Mammary epithelial cell (primary cell): ENCODE measurements at regions of chr10 and their contacts with region 1.

Region 1: DNA sequence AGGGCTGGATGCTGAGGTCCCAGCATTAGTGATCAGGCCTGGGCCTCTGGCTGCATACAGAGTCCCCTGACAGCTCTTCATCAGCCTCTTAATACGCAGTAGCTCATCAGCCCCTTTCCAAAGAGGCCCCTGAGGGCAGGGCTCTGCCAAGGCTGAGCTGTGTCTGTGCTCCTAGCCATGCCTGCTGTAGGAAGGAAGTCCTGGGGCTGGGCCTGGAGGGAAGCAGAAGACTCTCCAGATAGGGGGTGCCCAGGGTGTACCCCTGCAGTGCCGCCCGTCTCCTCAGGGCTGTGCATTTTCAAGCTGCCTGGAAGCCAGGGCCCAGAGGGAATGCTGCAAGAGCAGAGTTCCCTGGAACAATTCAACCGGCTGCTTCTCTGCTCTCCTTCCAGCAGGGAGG is 7.3 kb upstream of the RET start:
- DNase-seq: no peak
- H3K4me3 ChIP-seq: no peak overlapping the region
- H3K27ac ChIP-seq: no peak overlapping the region
- H3K4me1 ChIP-seq: no peaks in the 10 kb centered on the region
- H3K27me3 ChIP-seq: no peaks in the 10 kb centered on the region
- CTCF ChIP-seq: no peak

Region 2: GRCh38 chr10:43039624-43040481 is 29.7 kb before region 1 on chr10:
- CTCF ChIA-PET with region 1: no interaction called
- dilution Hi-C with region 1: no loop called
- in situ Hi-C with region 1: no loop called
- intact Hi-C with region 1: no loop called
- DNase-seq: no peak
- H3K4me3 ChIP-seq: no peak overlapping the region
- H3K27ac ChIP-seq: no peak overlapping the region
- H3K4me1 ChIP-seq: no peaks in the 10 kb centered on the region
- H3K27me3 ChIP-seq: no peaks in the 10 kb centered on the region
- CTCF ChIP-seq: no peak

Region 3: DNA sequence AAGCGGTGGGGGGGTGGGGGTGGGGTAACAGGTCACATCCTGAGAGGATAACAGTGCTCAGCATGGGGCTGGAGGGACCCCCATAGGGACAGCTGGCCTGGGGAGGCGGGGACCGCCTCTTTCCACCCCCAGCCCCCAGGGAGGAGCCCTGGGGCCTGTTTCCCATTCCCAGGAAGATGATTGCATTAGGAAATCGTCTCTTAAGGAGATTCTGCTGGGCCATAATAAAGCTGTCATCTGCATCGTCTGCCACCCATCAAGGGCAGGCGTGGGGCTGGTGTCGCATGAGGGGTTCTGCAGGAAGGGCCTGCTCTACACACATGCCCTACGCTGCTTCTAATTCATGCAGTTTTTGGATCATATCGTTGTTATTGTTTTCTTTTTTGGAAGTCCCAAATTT is 24.5 kb after region 1 on chr10:
- CTCF ChIA-PET with region 1: no interaction called
- dilution Hi-C with region 1: no loop called
- in situ Hi-C with region 1: no loop called
- intact Hi-C with region 1: no loop called
- DNase-seq: no peak
- H3K4me3 ChIP-seq: no peak overlapping the region
- H3K27ac ChIP-seq: no peak overlapping the region
- H3K4me1 ChIP-seq: no peaks in the 10 kb centered on the region
- H3K27me3 ChIP-seq: no peaks in the 10 kb centered on the region
- CTCF ChIP-seq: no peak

Region 4: DNA sequence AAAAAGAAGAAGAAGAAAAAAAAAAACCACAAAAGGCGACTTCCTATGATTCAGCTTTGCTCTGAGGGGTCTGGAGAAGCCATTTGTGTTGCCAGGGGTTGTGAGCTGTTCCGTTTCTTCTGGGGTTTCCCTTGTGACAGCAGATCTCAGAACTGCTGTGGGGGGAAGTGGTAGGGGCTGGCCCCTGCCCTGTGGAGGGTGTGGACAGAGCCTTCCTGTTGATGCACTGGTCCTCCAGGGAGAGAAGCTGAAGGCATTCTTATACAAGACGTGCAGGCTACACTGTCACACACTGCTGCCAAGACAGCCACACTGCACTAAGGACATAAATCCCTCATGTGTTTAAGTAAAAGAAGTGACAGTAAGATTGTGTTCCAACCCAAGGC is 51.3 kb after region 1 on chr10:
- CTCF ChIA-PET with region 1: no interaction called
- dilution Hi-C with region 1: loop called (anchors 5 kb)
- in situ Hi-C with region 1: no loop called
- intact Hi-C with region 1: no loop called
- DNase-seq: no peak
- H3K4me3 ChIP-seq: no peak overlapping the region
- H3K27ac ChIP-seq: no peak overlapping the region
- H3K4me1 ChIP-seq: no peaks in the 10 kb centered on the region
- H3K27me3 ChIP-seq: no peaks in the 10 kb centered on the region
- CTCF ChIP-seq: no peak